ENCODE measurements at regions of chr16 and their contacts with region 1.

Region 1: GRCh38 chr16:48623304-48624016 is 13.5 kb upstream of the N4BP1 start:
- DNase-seq: peak; percentile 85
- H3K4me3 Mint-ChIP-seq: peak overlapping the region; percentile 73
- H3K27ac Mint-ChIP-seq: peak overlapping the region; percentile 71
- H3K4me1 Mint-ChIP-seq: peaks cover 23% of the 10 kb centered on the region
- H3K27me3 Mint-ChIP-seq: no peaks in the 10 kb centered on the region

Region 2: GRCh38 chr16:47956916-47957315 is 666.5 kb before region 1 on chr16:
- CTCF ChIA-PET with region 1: no interaction called
- intact Hi-C with region 1: no loop called
- DNase-seq: no peak
- H3K4me3 Mint-ChIP-seq: no peak overlapping the region
- H3K27ac Mint-ChIP-seq: no peak overlapping the region
- H3K4me1 Mint-ChIP-seq: no peaks in the 10 kb centered on the region
- H3K27me3 Mint-ChIP-seq: peaks cover 2% of the 10 kb centered on the region

Region 3: DNA sequence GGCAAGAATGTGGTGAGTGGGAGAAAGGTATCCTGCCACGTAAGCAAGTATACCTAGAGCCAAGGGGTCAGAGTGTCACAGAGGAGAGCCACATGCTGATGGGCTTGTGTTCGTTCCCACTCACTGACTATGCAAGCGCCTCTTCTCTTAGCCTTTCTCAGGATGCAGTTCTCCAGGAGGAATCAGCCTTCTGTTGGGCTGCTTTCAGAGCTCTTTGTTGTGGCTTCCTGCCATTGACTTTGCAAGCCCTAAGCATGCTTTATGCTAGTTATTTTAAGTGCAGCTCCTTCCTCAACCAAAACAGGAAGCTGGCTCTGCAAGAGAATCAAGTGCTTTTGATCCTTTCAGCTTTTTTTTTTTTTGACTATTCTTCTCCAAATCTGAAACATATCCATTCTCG is 304.8 kb before region 1 on chr16:
- CTCF ChIA-PET with region 1: interaction called, 11 read pairs
- intact Hi-C with region 1: no loop called
- DNase-seq: peak; percentile 45
- H3K4me3 Mint-ChIP-seq: no peak overlapping the region
- H3K27ac Mint-ChIP-seq: peak overlapping the region; percentile 60
- H3K4me1 Mint-ChIP-seq: peaks cover 47% of the 10 kb centered on the region
- H3K27me3 Mint-ChIP-seq: no peaks in the 10 kb centered on the region

Region 4: DNA sequence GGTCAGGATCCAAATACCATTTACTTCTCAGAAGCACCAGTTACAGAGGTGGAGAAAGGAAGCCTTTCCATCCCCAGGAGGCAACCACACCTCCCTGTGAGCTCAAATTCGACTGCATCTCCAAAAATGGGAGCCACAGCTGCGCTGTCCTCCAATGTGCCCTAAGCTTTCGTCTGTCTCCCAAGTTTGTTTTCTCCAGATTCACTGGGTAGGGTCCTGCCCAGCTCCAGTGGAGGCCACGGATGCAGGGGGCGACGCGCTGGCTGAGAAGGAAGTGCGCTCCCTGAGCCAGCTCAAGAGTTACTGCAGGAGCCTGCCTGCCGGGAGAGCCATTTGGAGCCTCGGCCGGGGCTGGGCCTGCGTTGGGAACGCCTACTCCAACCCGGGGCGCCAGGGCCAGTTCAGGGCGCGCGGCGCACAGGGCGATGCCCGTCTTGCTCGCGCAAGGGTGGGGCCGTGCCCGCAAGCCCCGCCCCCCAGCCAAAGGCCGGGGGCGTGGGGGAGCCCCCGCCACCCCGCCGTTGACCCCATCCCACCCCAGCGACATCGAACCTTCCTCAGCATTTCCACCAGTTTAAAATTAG is 257.8 kb before region 1 on chr16:
- CTCF ChIA-PET with region 1: interaction called, 21 read pairs
- intact Hi-C with region 1: loop called (anchors 1 kb)
- DNase-seq: peak; percentile 88
- H3K4me3 Mint-ChIP-seq: peak overlapping the region; percentile 99
- H3K27ac Mint-ChIP-seq: peak overlapping the region; percentile 100
- H3K4me1 Mint-ChIP-seq: peaks cover 65% of the 10 kb centered on the region
- H3K27me3 Mint-ChIP-seq: no peaks in the 10 kb centered on the region

Region 5: DNA sequence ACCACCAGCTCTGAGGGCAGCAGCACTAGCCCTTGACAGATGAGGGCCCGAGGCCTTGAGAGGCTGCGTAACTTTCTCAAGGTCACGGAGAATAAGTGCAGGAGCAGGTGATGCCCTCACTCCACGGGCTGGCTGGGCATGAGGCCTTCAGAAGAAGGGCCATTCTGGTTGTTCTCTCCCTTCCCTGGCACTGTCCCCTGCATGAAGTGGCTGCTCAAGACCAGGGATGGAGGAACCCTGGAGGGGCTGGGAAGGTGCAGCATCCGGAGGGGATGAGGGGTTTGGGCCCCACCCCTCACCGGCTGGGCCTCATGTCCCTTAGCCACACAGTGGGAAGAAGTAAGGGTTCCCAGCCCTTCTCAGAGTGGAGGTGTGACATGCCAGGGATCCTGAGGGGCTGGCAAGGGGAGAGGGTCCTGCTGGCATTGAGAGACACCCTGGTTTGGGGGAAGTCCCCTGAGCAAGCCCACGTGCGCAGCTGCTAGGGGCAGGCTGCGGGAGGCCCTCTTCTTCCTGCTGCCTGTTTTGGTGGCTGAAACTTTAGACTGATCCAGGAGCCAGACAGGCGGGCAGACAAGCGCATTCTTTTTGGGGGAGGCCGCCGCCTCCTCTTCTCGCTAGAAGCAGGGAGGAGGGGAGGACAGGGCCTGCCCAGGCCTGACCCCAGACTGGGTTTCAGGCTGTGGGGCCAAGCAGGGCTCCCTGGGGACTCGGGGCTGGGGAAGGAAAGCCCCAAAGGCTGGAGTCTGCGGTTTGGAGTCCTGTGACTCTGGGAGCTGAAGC is 87.4 kb before region 1 on chr16:
- CTCF ChIA-PET with region 1: interaction called, 15 read pairs
- intact Hi-C with region 1: loop called (anchors 1 kb)
- DNase-seq: peak; percentile 39
- H3K4me3 Mint-ChIP-seq: no peak overlapping the region
- H3K27ac Mint-ChIP-seq: peak overlapping the region; percentile 24
- H3K4me1 Mint-ChIP-seq: peaks cover 17% of the 10 kb centered on the region
- H3K27me3 Mint-ChIP-seq: no peaks in the 10 kb centered on the region

Region 6: GRCh38 chr16:48596326-48596725 is 27.1 kb before region 1 on chr16:
- CTCF ChIA-PET with region 1: interaction called, 11 read pairs
- intact Hi-C with region 1: no loop called
- DNase-seq: peak; percentile 71
- H3K4me3 Mint-ChIP-seq: no peak overlapping the region
- H3K27ac Mint-ChIP-seq: peak overlapping the region; percentile 79
- H3K4me1 Mint-ChIP-seq: peaks cover 51% of the 10 kb centered on the region
- H3K27me3 Mint-ChIP-seq: no peaks in the 10 kb centered on the region

Region 7: DNA sequence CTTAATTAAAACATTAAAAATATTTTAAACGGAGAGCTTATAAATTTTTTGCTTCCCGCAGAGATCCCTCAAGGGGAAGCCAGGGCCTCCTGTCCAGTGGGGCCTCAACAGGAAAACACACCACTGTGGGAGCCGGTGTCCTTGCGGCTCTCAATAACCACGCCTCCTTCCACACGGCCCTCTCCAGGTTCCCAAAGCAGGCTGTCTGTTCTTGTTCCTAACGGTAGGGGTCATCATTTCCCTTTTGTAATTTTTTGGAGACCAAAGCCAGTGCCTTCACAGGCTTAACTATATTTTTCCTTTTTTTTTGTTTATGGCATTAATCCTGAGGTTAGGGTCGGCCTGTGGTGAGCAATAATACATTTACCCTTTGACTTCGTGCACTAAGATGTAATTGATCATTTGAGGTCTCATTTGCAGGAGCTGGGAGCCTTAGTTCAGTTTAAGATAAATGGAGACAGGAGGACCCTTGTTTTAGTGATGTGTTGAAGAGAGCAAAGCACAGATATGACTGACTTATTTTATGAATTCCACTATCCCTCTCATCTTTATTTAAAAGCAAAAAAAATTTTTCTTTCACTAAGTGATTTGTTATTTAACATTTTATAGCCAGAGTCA is 64.1 kb after region 1 on chr16:
- CTCF ChIA-PET with region 1: no interaction called
- intact Hi-C with region 1: no loop called
- DNase-seq: peak; percentile 59
- H3K4me3 Mint-ChIP-seq: no peak overlapping the region
- H3K27ac Mint-ChIP-seq: no peak overlapping the region
- H3K4me1 Mint-ChIP-seq: peaks cover 8% of the 10 kb centered on the region
- H3K27me3 Mint-ChIP-seq: peaks cover 16% of the 10 kb centered on the region